H1 (cell line): ENCODE measurements at regions of chr4 and their contacts with region 1.

Region 1: DNA sequence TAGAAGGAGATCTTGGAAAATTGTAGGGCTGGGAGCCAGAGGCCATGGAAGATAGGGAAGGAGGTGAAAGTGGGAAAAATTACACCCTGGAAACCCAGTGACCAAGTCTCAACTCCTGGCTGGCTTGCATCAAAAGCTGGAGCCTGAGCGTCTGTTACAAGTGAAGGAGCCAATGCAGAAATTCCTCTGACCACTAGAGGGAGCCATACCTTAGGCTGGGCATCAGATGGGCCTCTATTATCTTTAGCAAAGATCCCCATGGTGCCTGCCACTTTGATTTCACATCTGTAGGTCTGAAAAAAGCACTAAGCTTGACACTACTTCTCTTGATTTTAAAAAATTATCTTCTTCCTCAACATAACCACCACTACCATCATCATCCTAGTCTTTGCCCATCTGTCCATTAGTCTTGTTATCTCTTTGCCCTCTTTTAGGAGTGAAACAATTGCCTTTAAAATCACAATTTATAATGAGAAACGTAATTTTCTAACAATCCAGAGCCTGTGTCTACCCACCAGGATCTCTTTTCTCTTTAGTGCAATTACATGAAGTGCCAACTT is 62.9 kb downstream of the ANAPC4 start:
- DNase-seq: peak in 1 of 2 experiments; percentile 84
- H3K4me3 ChIP-seq: no peak overlapping the region
- H3K27ac ChIP-seq: no peak overlapping the region
- H3K4me1 ChIP-seq: no peaks in the 10 kb centered on the region; a peak in 2 of 7 replicates
- H3K27me3 ChIP-seq: no peaks in the 10 kb centered on the region
- CTCF ChIP-seq: peak; percentile 47 to 92 (median 87)
- EP300 ChIP-seq: no peak
- POLR2A ChIP-seq: no peak
- RAD21 ChIP-seq: peak; percentile 88 to 89

Region 2: DNA sequence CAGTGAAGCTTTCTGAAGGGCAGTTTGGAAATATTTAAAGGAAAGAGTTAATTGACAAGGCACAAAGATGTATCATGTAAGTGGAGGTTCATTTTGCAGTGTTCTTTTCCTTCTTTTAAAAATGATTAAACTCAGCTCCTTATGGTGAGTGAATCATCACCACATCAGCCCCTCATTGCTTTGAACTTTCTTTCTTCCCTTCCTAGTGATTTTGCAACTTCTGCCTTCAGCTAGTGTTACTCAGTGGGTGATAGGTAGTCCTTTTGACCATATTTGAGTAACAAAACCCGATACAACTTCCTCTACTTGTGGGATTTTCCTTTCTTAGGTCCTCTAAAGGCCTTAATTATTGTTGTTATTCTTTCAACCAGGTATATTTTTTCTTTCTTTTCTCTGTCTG is 119.2 kb before region 1 on chr4:
- CTCF ChIA-PET with region 1: no interaction called
- POLR2A ChIA-PET with region 1: no interaction called
- DNase-seq: no peak
- H3K4me3 ChIP-seq: no peak overlapping the region
- H3K27ac ChIP-seq: no peak overlapping the region
- H3K4me1 ChIP-seq: no peaks in the 10 kb centered on the region
- H3K27me3 ChIP-seq: no peaks in the 10 kb centered on the region
- CTCF ChIP-seq: no peak
- EP300 ChIP-seq: no peak
- POLR2A ChIP-seq: no peak
- RAD21 ChIP-seq: no peak

Region 3: DNA sequence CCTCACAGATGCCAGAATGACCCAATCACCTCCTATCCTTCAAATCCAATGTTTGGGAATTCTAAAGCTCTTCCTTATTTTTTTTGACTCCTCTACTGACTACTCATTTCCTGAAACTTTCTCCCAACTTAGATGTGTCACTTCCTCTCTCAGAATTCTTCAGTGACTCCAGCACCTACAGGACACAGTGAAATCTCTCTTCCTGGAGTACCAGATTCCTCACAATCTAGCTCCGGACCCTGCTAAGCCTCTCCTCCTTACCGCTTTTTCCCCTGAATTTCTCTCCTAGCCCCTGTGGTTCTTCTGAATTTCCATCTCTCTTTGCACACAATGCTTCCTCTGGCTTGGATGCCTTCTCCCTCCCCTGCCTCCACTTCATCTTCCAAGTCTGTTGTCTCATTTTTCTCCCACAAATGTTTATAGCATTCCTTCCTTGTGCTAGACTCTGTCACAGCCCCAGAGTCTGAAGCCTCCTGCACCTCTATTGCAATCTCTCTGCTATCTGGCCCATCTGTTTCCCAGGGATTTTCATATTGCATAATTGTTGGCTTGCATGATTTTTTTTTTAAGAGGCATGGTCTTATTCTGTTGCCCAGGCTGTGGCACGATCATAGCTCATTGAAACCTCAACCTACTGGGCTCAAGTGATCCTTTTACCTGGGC is 17.2 kb after region 1 on chr4:
- CTCF ChIA-PET with region 1: interaction called, 22 read pairs
- POLR2A ChIA-PET with region 1: no interaction called
- DNase-seq: no peak
- H3K4me3 ChIP-seq: no peak overlapping the region
- H3K27ac ChIP-seq: no peak overlapping the region
- H3K4me1 ChIP-seq: no peaks in the 10 kb centered on the region
- H3K27me3 ChIP-seq: no peaks in the 10 kb centered on the region
- CTCF ChIP-seq: no peak
- EP300 ChIP-seq: no peak
- POLR2A ChIP-seq: no peak
- RAD21 ChIP-seq: no peak

Region 4: GRCh38 chr4:25523405-25523804 is 83.4 kb after region 1 on chr4:
- CTCF ChIA-PET with region 1: interaction called, 32 read pairs
- POLR2A ChIA-PET with region 1: no interaction called
- DNase-seq: no peak
- H3K4me3 ChIP-seq: no peak overlapping the region
- H3K27ac ChIP-seq: no peak overlapping the region
- H3K4me1 ChIP-seq: peaks cover 0 to 4% (median 1%) of the 10 kb centered on the region in 4 experiments; a peak in 2 of 7 replicates
- H3K27me3 ChIP-seq: peaks cover 0 to 6% (median 0%) of the 10 kb centered on the region in 4 experiments; a peak in 2 of 7 replicates
- CTCF ChIP-seq: no peak
- EP300 ChIP-seq: no peak
- POLR2A ChIP-seq: no peak
- RAD21 ChIP-seq: no peak

Region 5: GRCh38 chr4:25621027-25621930 is 181.3 kb after region 1 on chr4:
- CTCF ChIA-PET with region 1: interaction called, 11 read pairs
- POLR2A ChIA-PET with region 1: no interaction called
- DNase-seq: no peak
- H3K4me3 ChIP-seq: no peak overlapping the region
- H3K27ac ChIP-seq: no peak overlapping the region
- H3K4me1 ChIP-seq: peaks cover 0 to 2% (median 0%) of the 10 kb centered on the region in 4 experiments; a peak in 1 of 7 replicates
- H3K27me3 ChIP-seq: no peaks in the 10 kb centered on the region
- CTCF ChIP-seq: no peak
- EP300 ChIP-seq: no peak
- POLR2A ChIP-seq: no peak
- RAD21 ChIP-seq: no peak

Region 6: DNA sequence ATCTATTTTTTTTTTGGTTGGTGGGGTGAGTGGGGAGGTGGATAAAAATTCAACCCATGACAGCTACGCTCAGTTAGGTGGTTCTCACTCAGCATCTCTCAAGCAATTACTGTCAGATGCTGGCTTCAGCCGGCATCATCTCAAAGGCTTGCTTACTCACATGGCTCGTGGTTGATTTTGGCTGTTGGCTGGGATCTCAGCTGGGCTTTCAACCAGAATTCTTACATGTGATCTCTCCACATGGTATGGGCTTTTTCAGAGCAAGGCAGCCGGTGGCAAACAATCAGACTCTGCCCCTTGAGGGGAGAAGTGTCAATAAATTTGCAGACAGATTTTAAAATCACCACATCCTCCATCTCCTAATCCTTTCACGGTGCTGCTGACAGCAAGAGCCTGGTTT is 262.9 kb after region 1 on chr4:
- CTCF ChIA-PET with region 1: interaction called, 19 read pairs
- POLR2A ChIA-PET with region 1: no interaction called
- DNase-seq: no peak
- H3K4me3 ChIP-seq: no peak overlapping the region
- H3K27ac ChIP-seq: no peak overlapping the region
- H3K4me1 ChIP-seq: no peaks in the 10 kb centered on the region
- H3K27me3 ChIP-seq: no peaks in the 10 kb centered on the region
- CTCF ChIP-seq: peak in 1 of 3 experiments; percentile 24; a peak in 1 of 4 replicates
- EP300 ChIP-seq: no peak
- POLR2A ChIP-seq: no peak
- RAD21 ChIP-seq: peak; percentile 23 to 27; a peak in 3 of 4 replicates

Region 7: GRCh38 chr4:25750874-25751273 is 310.9 kb after region 1 on chr4:
- CTCF ChIA-PET with region 1: interaction called, 52 read pairs
- POLR2A ChIA-PET with region 1: no interaction called
- DNase-seq: no peak
- H3K4me3 ChIP-seq: no peak overlapping the region
- H3K27ac ChIP-seq: no peak overlapping the region
- H3K4me1 ChIP-seq: no peaks in the 10 kb centered on the region
- H3K27me3 ChIP-seq: no peaks in the 10 kb centered on the region
- CTCF ChIP-seq: no peak
- EP300 ChIP-seq: no peak
- POLR2A ChIP-seq: no peak
- RAD21 ChIP-seq: no peak